Dorsolateral prefrontal cortex (tissue), 120 donors: ENCODE measurements at regions of chr7 and their contacts with region 1.

Region 1: GRCh38 chr7:138981332-138982203 is at the start of gene KIAA1549:
- DNase-seq: peak in 4 of 10 donors; percentile 37 to 71 (median 50)
- H3K4me3 ChIP-seq: peak within 1 kb of the TSS; percentile 45 to 80 (median 67)
- H3K27ac ChIP-seq: peak within 1 kb of the TSS in 47 of 59 donors; percentile 22 to 90 (median 65)
- H3K27me3 ChIP-seq: peaks cover 0 to 14% (median 0%) of the 10 kb centered on the region in 45 donors
- CTCF ChIP-seq: peak in 1 of 56 donors; percentile 9
- total RNA-seq, gene KIAA1549: 7.1 to 36.5 (median 21.1) TPM

Region 2: GRCh38 chr7:138880881-138881578 is 100.5 kb before region 1 on chr7:
- intact Hi-C with region 1: loop called in 1 of 2 experiments (anchors 5 kb)
- DNase-seq: no peak
- H3K4me3 ChIP-seq: no peak overlapping the region
- H3K27ac ChIP-seq: no peak overlapping the region
- H3K27me3 ChIP-seq: no peaks in the 10 kb centered on the region
- CTCF ChIP-seq: no peak

Region 3: DNA sequence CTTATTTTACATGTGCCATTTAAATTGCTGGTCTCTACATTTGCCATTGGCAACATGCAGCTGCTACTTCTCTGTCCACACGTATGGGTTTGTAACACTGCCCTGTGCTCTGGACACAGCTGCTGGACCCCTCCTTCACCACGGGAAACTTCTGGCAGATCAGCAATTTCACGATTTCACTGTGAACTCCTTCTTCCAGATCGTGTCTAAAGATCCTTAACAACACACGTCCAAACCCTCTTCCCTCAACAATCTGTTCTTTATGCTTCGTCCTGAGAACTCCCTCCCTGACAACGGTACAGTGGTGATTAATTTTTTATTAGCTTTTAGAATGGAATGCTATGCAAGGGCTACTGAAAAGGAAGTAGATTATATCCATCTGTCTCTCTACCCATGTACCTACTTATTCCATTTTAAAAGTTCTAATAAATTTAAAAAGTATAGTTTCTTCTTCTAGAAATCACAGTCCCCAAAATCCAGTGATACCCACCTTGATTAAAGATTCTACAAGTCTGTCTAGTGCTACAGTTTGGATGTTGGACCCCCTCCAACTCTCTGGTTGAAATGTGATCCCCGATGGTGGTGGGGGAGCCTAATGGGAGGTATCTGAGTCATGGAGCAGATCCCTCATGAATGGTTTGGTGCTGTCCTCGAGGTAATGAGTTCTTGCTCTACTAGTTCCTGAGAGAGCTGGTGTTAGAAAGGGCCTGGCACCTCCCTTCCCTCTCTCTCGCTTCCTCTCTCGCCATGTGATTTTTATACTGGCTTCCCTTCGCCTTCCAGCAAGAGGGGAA is 81.3 kb before region 1 on chr7:
- intact Hi-C with region 1: no loop called
- DNase-seq: no peak
- H3K4me3 ChIP-seq: no peak overlapping the region
- H3K27ac ChIP-seq: no peak overlapping the region
- H3K27me3 ChIP-seq: no peaks in the 10 kb centered on the region
- CTCF ChIP-seq: no peak

Region 4: DNA sequence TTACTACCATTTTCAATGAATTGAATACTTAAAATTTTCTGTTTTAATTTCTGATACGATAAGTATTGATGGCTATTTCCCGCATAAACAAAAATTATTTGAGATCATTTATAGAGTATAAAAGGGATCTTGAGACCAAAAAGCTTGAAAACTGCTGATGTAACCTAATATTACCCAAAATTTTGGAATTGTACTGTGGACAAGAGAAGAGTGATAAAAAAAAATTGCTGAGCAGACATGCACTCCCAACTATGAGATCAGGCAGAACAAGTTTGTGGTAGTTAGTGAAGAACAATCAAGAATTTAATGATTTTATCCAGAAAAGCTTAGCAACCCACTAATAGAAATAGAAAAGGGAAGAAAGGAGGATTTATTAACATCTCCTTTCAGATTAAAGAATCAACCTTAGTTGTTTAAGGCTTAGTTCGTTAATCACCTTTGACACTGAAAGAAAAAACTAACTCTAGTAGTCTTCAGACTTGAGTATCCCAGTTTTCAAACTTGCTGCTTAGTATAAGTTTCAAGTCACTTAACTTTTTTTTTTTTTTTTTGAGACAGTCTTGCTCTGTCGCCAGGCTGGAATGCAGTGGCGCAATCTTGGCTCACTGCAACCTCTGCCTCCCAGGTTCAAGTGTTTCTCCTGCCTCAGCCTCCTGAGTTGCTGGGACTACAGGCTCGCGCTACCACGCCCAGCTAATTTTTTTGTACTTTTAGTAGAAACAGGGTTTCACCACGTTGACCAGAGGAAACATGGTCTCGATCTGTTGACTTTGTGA is 178.5 kb after region 1 on chr7:
- intact Hi-C with region 1: no loop called
- DNase-seq: no peak
- H3K4me3 ChIP-seq: no peak overlapping the region
- H3K27ac ChIP-seq: no peak overlapping the region
- H3K27me3 ChIP-seq: no peaks in the 10 kb centered on the region
- CTCF ChIP-seq: no peak